PC-3 (cell line): ENCODE measurements at regions of chr7 and their contacts with region 1.

Region 1: GRCh38 chr7:135620980-135621850 is 41.1 kb upstream of the STMP1 start:
- DNase-seq: peak; percentile 89
- ATAC-seq: peak; percentile 90
- H3K4me3 ChIP-seq: no peak overlapping the region
- H3K27ac ChIP-seq: no peak overlapping the region
- H3K4me1 ChIP-seq: no peaks in the 10 kb centered on the region; the same call in 1 of the 2 replicates
- H3K27me3 ChIP-seq: no peaks in the 10 kb centered on the region
- CTCF ChIP-seq: peak; percentile 92

Region 2: GRCh38 chr7:135584362-135585353 is 36.6 kb before region 1 on chr7:
- CTCF ChIA-PET with region 1: no interaction called
- POLR2A ChIA-PET with region 1: no interaction called
- intact Hi-C with region 1: loop called (anchors 5 kb)
- DNase-seq: peak; percentile 56
- ATAC-seq: peak; percentile 97
- H3K4me3 ChIP-seq: no peak overlapping the region
- H3K27ac ChIP-seq: peak overlapping the region; percentile 72
- H3K4me1 ChIP-seq: peaks cover 11% of the 10 kb centered on the region
- H3K27me3 ChIP-seq: no peaks in the 10 kb centered on the region
- CTCF ChIP-seq: no peak

Region 3: DNA sequence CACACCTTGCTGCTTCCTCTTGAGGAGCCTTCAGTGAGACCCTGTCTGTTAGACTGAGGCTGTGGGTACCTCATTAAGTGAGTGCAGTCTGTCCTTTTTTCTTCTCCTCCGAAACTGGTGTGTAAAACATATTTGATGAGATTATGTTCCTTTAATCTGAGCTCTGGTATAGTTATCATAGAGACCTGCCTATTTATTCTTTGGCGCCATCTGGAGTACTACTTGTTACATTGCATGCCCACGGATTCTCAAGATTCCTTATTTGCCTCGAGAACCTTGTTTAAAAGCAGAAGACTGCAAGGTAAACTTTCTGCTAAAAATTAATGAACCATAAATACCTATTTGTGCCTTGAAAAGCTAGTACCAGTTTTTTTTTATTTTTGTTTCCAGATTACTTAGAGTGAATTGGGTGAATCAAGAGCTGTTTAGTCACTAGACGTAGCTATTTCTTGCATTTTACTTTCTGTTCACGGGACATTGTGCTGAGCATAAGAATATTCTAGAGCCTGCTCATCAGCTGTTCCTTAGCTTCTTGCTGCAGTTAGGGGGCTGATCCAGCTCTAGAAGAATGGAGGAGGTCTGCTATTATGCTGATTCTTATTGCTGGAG is 24.2 kb after region 1 on chr7:
- CTCF ChIA-PET with region 1: interaction called, 5 read pairs
- POLR2A ChIA-PET with region 1: no interaction called
- intact Hi-C with region 1: loop called (anchors 1 kb)
- DNase-seq: peak; percentile 63
- ATAC-seq: peak; percentile 80
- H3K4me3 ChIP-seq: no peak overlapping the region
- H3K27ac ChIP-seq: no peak overlapping the region
- H3K4me1 ChIP-seq: no peaks in the 10 kb centered on the region
- H3K27me3 ChIP-seq: no peaks in the 10 kb centered on the region
- CTCF ChIP-seq: peak; percentile 67

Region 4: DNA sequence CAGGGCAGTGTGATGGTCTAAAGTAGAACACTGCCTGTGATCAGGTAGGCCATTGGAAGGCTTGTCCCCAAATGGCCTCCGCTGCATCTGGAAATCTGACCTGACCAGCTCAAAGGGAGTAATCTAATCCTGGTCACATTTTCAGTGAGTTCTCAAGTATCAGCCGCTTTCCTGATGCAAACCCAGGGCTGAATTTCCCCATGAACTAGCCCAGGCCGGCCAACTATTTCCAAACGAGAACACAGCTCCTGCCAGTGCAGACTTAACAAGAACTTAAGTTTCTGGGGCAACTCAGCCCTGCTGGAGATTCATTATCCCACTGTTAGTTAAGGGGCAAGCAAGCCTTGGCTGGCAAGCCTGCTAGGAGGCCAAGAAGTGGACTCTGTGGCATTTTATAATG is 187.0 kb after region 1 on chr7:
- CTCF ChIA-PET with region 1: no interaction called
- POLR2A ChIA-PET with region 1: no interaction called
- intact Hi-C with region 1: no loop called
- DNase-seq: no peak
- ATAC-seq: no peak
- H3K4me3 ChIP-seq: no peak overlapping the region
- H3K27ac ChIP-seq: no peak overlapping the region
- H3K4me1 ChIP-seq: no peaks in the 10 kb centered on the region
- H3K27me3 ChIP-seq: 0 out of 2 replicates have a peak, but pooled peaks cover 5% of the 10 kb centered on the region
- CTCF ChIP-seq: no peak

Region 5: GRCh38 chr7:136163340-136163801 is 542.2 kb after region 1 on chr7:
- CTCF ChIA-PET with region 1: no interaction called
- POLR2A ChIA-PET with region 1: no interaction called
- intact Hi-C with region 1: no loop called
- DNase-seq: no peak
- ATAC-seq: no peak
- H3K4me3 ChIP-seq: no peak overlapping the region
- H3K27ac ChIP-seq: no peak overlapping the region
- H3K4me1 ChIP-seq: no peaks in the 10 kb centered on the region
- H3K27me3 ChIP-seq: peaks cover under 1% of the 10 kb centered on the region; the same call in 1 of the 2 replicates
- CTCF ChIP-seq: no peak